ENCODE measurements at regions of chr1 and their contacts with region 1.

Region 1: DNA sequence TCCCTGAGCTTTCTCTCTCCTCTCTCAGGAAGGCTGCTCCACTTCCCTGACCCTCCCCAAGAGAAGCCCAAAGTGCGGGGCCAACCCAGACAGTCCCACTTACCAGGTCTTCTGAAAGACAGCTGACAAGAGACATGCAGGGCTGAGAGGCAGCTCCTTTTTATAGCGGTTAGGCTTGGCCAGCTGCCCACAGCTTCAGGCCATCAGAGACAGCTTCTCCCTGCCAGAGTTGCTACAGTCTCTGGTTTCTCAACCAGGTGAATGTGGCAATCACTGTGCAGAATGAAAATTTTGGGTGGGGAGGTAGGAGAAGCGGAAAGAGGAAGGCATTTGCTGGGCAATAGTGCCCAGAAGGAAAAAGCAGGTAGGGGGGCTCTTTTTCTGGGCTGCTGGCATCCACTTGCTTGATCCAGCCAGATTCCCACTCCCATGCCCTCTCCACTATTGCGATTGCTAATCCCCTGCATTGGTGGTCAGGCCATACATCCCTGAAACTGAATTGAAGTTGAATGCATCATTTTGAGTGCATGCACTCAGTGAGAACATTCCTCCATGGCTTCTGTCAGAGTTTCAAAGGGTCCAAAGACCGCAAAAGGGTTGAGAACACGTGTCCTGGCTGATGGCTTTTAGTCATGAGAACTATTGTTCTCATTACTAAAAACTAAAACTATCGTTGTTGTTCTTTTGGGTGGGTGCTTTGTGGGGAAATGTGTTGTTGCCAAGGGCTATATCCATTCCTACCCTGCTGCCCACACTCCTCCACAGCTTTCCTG is at the start of gene S100A8:
- DNase-seq: no peak
- ATAC-seq: no peak
- H3K4me3 ChIP-seq: no peak within 1 kb of the TSS
- H3K27ac ChIP-seq: no peak within 1 kb of the TSS
- H3K4me1 ChIP-seq: no peaks in the 10 kb centered on the region
- H3K27me3 ChIP-seq: peaks cover 0 to 10% of the 10 kb centered on the region in 2 experiments; a peak in 4 of 5 replicates
- CTCF ChIP-seq: no peak
- EP300 ChIP-seq: no peak
- POLR2A ChIP-seq: no peak
- RAD21 ChIP-seq: no peak
- total RNA-seq, gene S100A8: not detected in 2 replicates

Region 2: DNA sequence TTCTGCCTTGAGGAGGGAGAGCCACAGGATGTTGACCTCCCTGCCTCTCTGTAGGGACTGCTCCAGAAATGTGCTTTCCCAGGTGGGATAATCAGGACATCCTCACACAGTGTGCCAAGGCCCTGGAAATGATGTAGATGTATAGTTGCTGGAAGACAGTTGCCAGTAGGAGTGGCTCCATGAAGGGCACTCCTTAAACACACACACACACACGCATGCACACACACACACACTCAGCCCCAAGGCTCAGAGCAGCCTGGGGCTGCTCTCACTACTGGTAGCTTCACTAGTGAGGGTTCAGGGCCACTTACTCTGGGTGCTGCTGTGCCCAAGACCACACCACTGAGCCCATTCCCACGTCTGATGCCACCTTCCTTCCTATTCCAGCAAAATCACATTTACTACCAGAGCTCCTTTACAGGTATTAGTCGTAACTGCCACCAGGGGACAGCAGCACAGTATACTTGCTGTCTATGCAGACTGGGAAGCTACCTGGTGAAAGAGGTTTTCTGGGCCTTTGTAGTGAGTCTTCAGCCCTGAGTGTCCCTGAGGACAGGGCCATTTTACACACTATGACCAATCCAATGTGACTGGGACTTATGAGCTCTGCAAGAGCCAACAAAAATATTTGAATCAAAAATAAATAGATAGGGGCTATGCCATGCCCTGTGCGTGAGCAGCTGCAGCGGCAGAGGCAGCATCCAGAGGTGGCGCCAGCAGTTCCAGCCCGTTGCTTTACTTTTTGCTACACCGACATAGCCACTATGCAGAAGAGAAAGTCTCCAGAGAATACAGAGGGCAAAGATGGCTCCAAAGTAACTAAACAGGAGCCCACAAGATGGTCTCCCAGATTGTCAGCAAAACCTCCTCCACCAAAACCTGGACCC is 992.1 kb before region 1 on chr1:
- CTCF ChIA-PET with region 1: no interaction called
- POLR2A ChIA-PET with region 1: no interaction called
- in situ Hi-C with region 1: no loop called
- intact Hi-C with region 1: loop called (anchors 10 kb)
- DNase-seq: peak; percentile 25
- ATAC-seq: peak; percentile 91
- H3K4me3 ChIP-seq: no peak overlapping the region
- H3K27ac ChIP-seq: no peak overlapping the region
- H3K4me1 ChIP-seq: no peaks in the 10 kb centered on the region
- H3K27me3 ChIP-seq: no peaks in the 10 kb centered on the region
- CTCF ChIP-seq: peak; percentile 55
- EP300 ChIP-seq: no peak
- POLR2A ChIP-seq: no peak
- RAD21 ChIP-seq: no peak

Region 3: DNA sequence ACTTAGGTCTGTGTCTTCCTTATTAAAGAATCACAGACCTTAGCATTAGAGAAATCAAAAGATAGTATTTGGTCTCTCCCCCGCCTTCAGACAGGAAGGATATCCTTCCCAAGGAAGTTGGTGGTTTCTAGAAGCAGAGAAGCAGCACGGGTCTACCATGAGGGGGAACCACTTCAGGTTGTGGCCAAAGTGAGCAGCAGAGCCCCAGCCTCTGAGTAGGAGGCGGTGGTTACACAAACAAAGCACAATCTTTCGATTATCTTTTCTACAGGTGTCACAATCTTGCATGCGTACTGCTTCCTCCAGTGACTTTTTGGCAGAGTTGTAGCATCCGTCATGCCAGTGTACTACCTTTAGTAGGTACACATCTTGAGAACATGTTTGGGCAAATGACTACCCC is 51.3 kb before region 1 on chr1:
- CTCF ChIA-PET with region 1: no interaction called
- POLR2A ChIA-PET with region 1: no interaction called
- in situ Hi-C with region 1: no loop called
- intact Hi-C with region 1: loop called (anchors 10 kb)
- DNase-seq: no peak
- ATAC-seq: no peak
- H3K4me3 ChIP-seq: no peak overlapping the region
- H3K27ac ChIP-seq: no peak overlapping the region
- H3K4me1 ChIP-seq: no peaks in the 10 kb centered on the region
- H3K27me3 ChIP-seq: peaks cover 0 to 1% of the 10 kb centered on the region in 2 experiments; a peak in 2 of 5 replicates
- CTCF ChIP-seq: no peak
- EP300 ChIP-seq: no peak
- POLR2A ChIP-seq: no peak
- RAD21 ChIP-seq: no peak

Measured in HepG2 (cell line).